SK-N-SH (cell line): ENCODE measurements at regions of chr17 and their contacts with region 1.

Region 1: DNA sequence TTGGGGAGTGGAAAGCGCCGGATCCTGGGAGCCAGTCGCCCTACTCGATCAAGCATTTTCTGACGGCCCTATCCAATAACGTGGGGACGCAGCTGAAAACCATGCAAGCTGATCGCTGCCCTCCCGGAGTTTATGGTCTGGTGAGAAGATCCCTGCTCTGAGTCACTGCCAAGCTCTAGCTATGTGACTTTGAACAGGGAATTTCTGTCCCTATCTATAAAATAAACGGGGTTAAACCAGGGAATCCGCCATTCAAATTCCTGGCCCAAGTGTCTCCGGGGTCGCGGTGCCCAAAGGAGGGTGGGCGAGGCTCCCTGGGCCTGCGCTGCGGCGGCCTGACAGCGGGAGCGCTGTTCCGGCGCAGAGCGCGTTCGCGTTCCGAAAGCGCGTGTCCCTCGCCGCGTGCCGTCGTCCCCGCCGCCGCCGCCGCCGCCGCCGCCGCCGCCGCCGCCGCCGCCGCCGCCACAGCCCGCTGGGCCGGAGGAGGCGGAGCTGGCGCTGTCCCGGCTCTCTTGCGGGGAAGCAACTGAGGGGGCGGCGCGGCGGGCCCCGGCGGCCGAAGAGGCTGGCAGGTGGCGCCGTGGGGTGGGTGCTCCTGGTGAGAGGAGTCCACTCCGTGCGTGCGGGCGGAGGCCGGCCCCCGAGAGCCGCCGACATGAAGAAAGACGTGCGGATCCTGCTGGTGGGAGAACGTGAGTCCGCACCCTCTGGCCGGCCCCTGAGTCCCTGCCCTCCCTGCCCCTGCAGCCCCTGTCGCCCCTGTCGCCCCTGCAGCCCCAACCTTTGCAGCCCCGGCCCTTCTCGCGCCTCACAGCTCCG is at the start of gene RHOT1:
- DNase-seq: peak; percentile 91
- H3K4me3 ChIP-seq: peak within 1 kb of the TSS; percentile 68 to 84
- H3K27ac ChIP-seq: peak within 1 kb of the TSS; percentile 77 to 85
- H3K4me1 ChIP-seq: peaks cover 0 to 3% of the 10 kb centered on the region in 2 experiments; a peak in 1 of 4 replicates
- H3K27me3 ChIP-seq: no peaks in the 10 kb centered on the region
- CTCF ChIP-seq: peak; percentile 57
- EP300 ChIP-seq: peak in 1 of 2 experiments; percentile 46; a peak in 1 of 4 replicates
- RAD21 ChIP-seq: no peak
- polyA plus RNA-seq, gene RHOT1: 25.0 and 36.1 TPM in 2 replicates

Region 2: GRCh38 chr17:31997005-31997404 is 145.2 kb before region 1 on chr17:
- CTCF ChIA-PET with region 1: interaction called, 10 read pairs
- POLR2A ChIA-PET with region 1: no interaction called
- DNase-seq: no peak
- H3K4me3 ChIP-seq: no peak overlapping the region
- H3K27ac ChIP-seq: no peak overlapping the region
- H3K4me1 ChIP-seq: no peaks in the 10 kb centered on the region
- H3K27me3 ChIP-seq: no peaks in the 10 kb centered on the region
- CTCF ChIP-seq: no peak
- EP300 ChIP-seq: no peak
- RAD21 ChIP-seq: no peak

Region 3: GRCh38 chr17:32127158-32127897 is 14.9 kb before region 1 on chr17:
- CTCF ChIA-PET with region 1: interaction called, 18 read pairs
- POLR2A ChIA-PET with region 1: interaction called, 3 read pairs
- DNase-seq: peak; percentile 80
- H3K4me3 ChIP-seq: peak overlapping the region; percentile 57 to 78
- H3K27ac ChIP-seq: peak overlapping the region; percentile 79 to 87
- H3K4me1 ChIP-seq: peaks cover 0 to 13% of the 10 kb centered on the region in 2 experiments; a peak in 1 of 4 replicates
- H3K27me3 ChIP-seq: no peaks in the 10 kb centered on the region
- CTCF ChIP-seq: no peak
- EP300 ChIP-seq: no peak
- RAD21 ChIP-seq: no peak

Region 4: GRCh38 chr17:32298298-32298697 is 156.1 kb after region 1 on chr17:
- CTCF ChIA-PET with region 1: no interaction called
- POLR2A ChIA-PET with region 1: no interaction called
- DNase-seq: no peak
- H3K4me3 ChIP-seq: no peak overlapping the region
- H3K27ac ChIP-seq: no peak overlapping the region
- H3K4me1 ChIP-seq: peaks cover 0 to 12% of the 10 kb centered on the region in 2 experiments; a peak in 1 of 4 replicates
- H3K27me3 ChIP-seq: no peaks in the 10 kb centered on the region
- CTCF ChIP-seq: no peak
- EP300 ChIP-seq: no peak
- RAD21 ChIP-seq: no peak